Left ventricle myocardium superior (tissue), 1 donor: ENCODE measurements at regions of chr18 and their contacts with region 1.

Region 1: DNA sequence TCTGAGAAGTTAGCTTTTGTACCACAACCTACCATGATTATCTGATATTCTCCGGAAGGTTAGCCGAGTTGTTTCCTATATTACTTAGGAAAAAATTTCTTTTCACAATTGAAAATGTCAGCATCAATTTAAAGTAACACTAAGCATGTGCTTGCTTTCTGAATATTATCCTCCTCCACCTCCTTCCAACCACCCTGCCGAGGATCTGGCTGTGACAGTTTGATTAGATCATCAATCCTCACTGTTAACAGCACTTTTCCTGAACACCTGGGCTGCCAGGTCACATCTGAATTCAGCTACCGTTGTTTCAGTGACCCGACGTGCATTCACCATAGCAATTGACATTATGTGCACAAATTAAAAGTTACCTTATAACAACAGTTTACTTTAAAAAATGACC is 207.0 kb downstream of the ZNF407 start:
- DNase-seq: no peak
- ATAC-seq: no peak

Region 2: GRCh38 chr18:75003764-75004690 is 199.3 kb after region 1 on chr18:
- intact Hi-C with region 1: no loop called
- DNase-seq: no peak
- ATAC-seq: peak; percentile 98

Region 3: DNA sequence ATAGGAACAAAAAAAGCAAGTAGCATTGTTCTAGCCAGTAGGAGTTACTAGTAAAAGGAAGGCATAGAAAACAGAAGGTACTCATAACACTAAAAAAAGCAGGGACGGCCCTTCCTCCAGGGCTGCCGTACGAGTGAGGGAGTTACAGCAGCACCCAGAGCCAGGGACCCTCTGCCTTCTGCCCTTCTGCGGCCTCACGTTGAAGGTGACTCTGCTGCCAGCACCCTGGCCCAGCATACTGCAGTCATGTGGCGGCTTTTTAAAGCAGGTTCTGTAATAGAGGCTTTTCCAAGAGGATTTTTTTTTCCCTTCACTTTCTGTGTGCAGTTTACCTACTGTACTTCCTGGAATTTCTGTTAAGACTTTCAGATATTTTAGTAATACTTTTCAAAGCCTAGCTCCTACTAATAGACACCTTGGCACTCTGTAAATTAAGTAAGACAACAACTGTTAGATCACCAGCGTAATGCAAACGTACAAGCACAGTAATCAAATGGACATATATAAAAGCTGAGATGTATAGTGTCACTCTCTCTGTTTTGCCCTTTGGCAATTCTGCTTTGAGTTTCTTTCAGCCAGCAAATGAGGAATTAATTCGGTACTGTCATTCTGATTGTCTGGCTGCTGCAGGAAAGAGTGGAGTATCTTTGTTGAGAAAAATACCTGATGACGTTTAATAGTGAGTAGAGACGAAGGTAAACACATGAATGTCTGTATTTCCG is 242.7 kb after region 1 on chr18:
- intact Hi-C with region 1: loop called (anchors 5 kb)
- DNase-seq: peak; percentile 56
- ATAC-seq: peak; percentile 77

Region 4: GRCh38 chr18:75105551-75106254 is 301.0 kb after region 1 on chr18:
- intact Hi-C with region 1: no loop called
- DNase-seq: no peak
- ATAC-seq: no peak